CD4-positive, alpha-beta memory T cell (primary cell): ENCODE measurements at regions of chr6 and their contacts with region 1.

Region 1: DNA sequence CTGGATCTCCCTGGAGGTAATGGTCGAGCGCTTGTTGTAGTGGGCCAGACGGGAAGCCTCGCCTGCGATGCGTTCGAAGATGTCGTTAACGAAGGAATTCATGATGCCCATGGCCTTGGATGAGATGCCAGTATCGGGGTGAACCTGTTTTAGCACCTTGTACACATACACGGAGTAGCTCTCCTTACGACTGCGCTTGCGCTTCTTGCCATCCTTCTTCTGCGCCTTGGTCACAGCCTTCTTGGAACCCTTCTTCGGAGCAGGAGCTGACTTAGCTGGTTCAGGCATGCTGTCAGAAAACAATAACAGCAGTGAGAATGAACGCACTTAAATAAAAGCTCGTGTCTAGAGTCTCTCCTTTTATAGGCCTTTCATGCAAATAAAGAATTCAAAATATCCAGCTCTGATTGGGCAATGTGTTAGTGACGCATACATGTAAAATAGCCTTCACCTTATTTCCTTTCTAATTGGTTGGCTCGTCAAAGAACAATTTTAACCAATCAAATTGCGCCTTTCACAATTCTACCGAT is 129.2 kb downstream of the HFE start:
- DNase-seq: peak; percentile 88 to 96 (median 94)
- H3K4me3 ChIP-seq: peak overlapping the region; percentile 75 to 85
- H3K4me3 Mint-ChIP-seq: no peak overlapping the region
- H3K27ac ChIP-seq: peak overlapping the region; percentile 82
- H3K27ac Mint-ChIP-seq: no peak overlapping the region
- H3K4me1 ChIP-seq: peaks cover 26% of the 10 kb centered on the region
- H3K4me1 Mint-ChIP-seq: peaks cover 0 to 5% (median 2%) of the 10 kb centered on the region in 4 donors
- H3K27me3 ChIP-seq: no peaks in the 10 kb centered on the region
- H3K27me3 Mint-ChIP-seq: no peaks in the 10 kb centered on the region

Region 2: DNA sequence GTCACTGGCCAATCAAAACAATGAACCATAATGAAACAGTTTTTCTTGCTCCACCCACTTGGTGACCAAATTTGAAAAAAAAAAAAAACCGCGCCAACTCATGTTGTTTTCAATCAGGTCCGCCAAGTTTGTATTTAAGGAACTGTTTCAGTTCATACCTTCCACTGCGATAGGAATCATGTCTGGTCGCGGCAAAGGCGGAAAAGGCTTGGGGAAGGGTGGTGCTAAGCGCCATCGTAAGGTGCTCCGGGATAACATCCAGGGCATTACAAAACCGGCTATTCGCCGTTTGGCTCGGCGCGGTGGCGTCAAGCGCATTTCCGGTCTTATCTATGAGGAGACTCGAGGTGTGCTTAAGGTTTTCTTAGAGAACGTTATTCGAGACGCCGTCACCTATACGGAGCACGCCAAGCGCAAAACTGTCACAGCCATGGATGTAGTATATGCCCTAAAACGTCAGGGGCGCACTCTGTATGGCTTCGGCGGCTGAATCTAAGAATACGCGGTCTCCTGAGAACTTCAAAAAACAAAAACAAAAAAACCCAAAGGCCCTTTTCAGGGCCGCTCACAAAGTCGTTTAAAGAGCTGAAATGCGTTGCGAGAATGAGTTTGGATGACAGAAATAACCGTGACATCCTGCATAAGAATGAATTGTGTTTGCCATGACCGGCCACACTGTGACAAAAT is 112.5 kb before region 1 on chr6:
- CTCF ChIA-PET with region 1: interaction called, 3 read pairs
- POLR2A ChIA-PET with region 1: interaction called, 34 read pairs
- intact Hi-C with region 1: loop called (anchors 1 kb)
- DNase-seq: peak; percentile 93 to 96 (median 94)
- H3K4me3 ChIP-seq: peak overlapping the region; percentile 36 to 39
- H3K4me3 Mint-ChIP-seq: peak overlapping the region; percentile 84 to 96 (median 92)
- H3K27ac ChIP-seq: peak overlapping the region; percentile 66
- H3K27ac Mint-ChIP-seq: peak overlapping the region; percentile 96 to 100 (median 99)
- H3K4me1 ChIP-seq: peaks cover 17% of the 10 kb centered on the region
- H3K4me1 Mint-ChIP-seq: peaks cover 11 to 19% (median 15%) of the 10 kb centered on the region in 4 donors
- H3K27me3 ChIP-seq: no peaks in the 10 kb centered on the region
- H3K27me3 Mint-ChIP-seq: peaks cover 2 to 6% of the 10 kb centered on the region in 2 donors

Region 3: GRCh38 chr6:26204332-26205165 is 11.9 kb before region 1 on chr6:
- CTCF ChIA-PET with region 1: interaction called, 63 read pairs
- POLR2A ChIA-PET with region 1: interaction called, 1,953 read pairs
- intact Hi-C with region 1: loop called (anchors 1 kb)
- DNase-seq: peak; percentile 85 to 95 (median 89)
- H3K4me3 ChIP-seq: peak overlapping the region; percentile 48 to 87
- H3K4me3 Mint-ChIP-seq: no peak overlapping the region
- H3K27ac ChIP-seq: peak overlapping the region; percentile 82
- H3K27ac Mint-ChIP-seq: no peak overlapping the region
- H3K4me1 ChIP-seq: peaks cover 39% of the 10 kb centered on the region
- H3K4me1 Mint-ChIP-seq: peaks cover 8 to 26% (median 13%) of the 10 kb centered on the region in 4 donors
- H3K27me3 ChIP-seq: no peaks in the 10 kb centered on the region
- H3K27me3 Mint-ChIP-seq: peaks cover 0 to 3% of the 10 kb centered on the region in 2 donors

Region 4: DNA sequence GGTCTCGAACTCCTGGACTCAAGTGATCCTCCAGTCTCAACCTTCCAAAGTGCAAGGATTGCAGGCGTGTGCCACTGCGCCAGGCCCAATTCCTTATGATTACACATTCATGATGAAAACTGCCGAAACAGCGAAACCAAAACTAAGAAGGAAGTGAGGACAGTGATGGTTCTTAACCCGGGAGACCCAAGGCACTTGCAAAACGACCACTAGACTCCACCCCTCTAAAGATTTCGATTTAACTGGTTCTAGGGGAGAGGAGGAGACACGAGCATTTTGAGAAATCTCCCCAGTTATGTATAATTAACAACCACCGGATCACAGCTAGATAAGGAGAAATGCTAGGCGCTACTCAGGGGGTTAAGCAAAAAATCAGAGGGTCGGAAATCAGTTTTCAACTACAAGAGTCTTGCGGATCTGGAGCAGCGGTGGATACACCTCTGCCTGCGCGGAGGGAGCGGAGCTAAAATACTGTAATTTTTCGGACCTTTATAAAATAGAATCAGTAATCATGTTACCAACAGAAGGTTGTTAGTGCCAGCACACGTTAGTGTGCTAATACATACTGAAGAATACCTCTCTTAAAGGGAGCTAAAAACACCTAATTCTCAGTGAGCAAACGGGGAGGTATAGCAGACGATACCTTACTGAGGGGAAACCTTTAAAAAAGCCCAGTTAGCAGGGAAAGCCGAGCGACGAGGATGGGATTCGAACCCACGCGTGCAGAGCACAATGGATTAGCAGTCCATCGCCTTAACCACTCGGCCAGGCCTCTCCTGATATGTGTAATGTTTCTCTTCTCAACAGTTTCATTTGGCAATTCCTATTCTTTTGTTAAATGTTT is 88.6 kb after region 1 on chr6:
- CTCF ChIA-PET with region 1: no interaction called
- POLR2A ChIA-PET with region 1: interaction called, 10 read pairs
- intact Hi-C with region 1: no loop called
- DNase-seq: peak; percentile 48 to 80 (median 74)
- H3K4me3 ChIP-seq: peak overlapping the region; percentile 33 to 59
- H3K4me3 Mint-ChIP-seq: peak overlapping the region; percentile 86 to 97 (median 93)
- H3K27ac ChIP-seq: peak overlapping the region; percentile 51
- H3K27ac Mint-ChIP-seq: peak overlapping the region in 6 of 7 donors; percentile 92 to 96 (median 94)
- H3K4me1 ChIP-seq: peaks cover 19% of the 10 kb centered on the region
- H3K4me1 Mint-ChIP-seq: peaks cover 19 to 41% (median 31%) of the 10 kb centered on the region in 4 donors
- H3K27me3 ChIP-seq: no peaks in the 10 kb centered on the region
- H3K27me3 Mint-ChIP-seq: peaks cover 0 to 2% of the 10 kb centered on the region in 2 donors

Region 5: DNA sequence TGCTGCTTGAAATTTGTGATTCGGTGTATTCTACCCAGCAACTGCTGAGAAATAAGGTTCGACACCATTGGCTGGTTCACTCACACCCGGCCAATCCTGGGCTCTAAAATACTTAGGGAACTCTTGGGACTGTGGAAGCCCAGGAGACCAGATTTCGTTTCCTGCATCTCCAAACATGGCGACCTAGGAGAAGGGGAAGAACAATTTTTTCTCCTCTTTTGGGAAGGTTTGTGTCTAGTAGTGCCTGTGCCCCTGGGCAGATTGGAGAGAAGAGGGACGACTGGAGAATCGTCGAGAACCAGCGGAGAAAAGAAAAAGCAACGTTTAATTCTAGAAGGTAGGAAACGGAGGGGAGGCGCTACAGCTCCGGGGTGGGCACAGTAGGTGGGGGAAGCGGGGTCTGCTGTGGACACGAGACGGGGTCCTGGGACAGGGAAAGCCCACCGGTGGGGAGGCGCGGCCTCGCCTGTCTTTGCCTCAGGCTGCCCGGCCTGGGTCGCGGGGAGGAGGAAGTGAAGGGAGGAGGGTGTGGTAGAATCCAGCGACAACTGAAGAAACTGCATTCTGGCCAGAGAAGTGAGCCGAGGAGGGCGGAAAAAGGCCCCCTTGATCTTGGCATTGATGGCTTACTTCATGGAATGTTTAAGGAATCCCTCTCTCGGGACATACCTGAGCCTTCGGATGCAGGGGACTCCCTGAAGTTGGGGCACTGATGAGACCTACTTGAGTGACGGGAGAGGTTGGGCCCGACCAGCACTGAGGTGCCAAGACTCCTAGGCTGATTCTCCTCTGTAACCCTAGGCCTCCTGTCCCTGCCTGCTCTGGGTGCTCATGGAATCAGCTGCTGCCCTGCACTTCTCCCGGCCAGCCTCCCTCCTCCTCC is 241.6 kb after region 1 on chr6 and contains the start of gene BTN2A1:
- CTCF ChIA-PET with region 1: no interaction called
- POLR2A ChIA-PET with region 1: no interaction called
- intact Hi-C with region 1: no loop called
- DNase-seq: peak; percentile 76 to 86 (median 78)
- H3K4me3 ChIP-seq: peak within 1 kb of the TSS; percentile 90 to 95
- H3K4me3 Mint-ChIP-seq: peak within 1 kb of the TSS; percentile 96 to 100 (median 98)
- H3K27ac ChIP-seq: peak within 1 kb of the TSS; percentile 85
- H3K27ac Mint-ChIP-seq: peak within 1 kb of the TSS; percentile 91 to 99 (median 98)
- H3K4me1 ChIP-seq: peaks cover 47% of the 10 kb centered on the region
- H3K4me1 Mint-ChIP-seq: peaks cover 45 to 73% (median 57%) of the 10 kb centered on the region in 4 donors
- H3K27me3 ChIP-seq: no peaks in the 10 kb centered on the region
- H3K27me3 Mint-ChIP-seq: no peaks in the 10 kb centered on the region
- total RNA-seq, gene BTN2A1: 57.0 to 62.8 TPM

Region 6: DNA sequence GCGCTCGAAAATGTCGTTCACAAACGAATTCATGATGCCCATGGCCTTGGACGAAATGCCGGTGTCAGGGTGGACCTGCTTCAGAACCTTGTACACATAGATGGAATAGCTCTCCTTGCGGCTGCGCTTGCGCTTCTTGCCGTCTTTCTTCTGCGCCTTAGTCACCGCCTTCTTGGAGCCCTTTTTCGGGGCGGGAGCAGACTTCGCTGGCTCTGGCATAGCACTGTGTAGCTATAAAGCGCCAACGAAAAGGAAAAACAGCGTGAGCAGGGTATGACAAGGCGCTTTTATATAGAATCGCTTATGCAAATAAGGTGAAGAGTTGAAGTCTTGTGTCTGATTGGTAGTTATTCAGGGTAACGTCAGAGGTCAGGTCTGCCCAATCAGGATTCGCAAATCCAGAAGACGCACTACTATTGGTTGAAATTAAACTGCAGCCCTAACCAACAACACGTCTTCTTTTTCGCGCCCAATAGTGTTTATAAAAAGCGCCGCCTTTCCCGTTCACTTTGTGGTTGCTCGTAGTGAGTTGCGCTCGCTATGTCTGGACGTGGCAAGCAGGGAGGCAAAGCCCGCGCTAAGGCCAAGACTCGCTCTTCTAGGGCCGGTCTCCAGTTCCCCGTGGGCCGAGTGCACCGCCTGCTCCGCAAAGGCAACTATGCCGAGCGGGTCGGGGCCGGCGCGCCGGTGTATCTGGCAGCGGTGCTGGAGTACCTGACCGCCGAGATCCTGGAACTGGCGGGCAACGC is 916.3 kb after region 1 on chr6:
- CTCF ChIA-PET with region 1: no interaction called
- POLR2A ChIA-PET with region 1: interaction called, 40 read pairs
- intact Hi-C with region 1: no loop called
- DNase-seq: peak; percentile 96 to 99 (median 98)
- H3K4me3 ChIP-seq: peak overlapping the region; percentile 72 to 90
- H3K4me3 Mint-ChIP-seq: no peak overlapping the region
- H3K27ac ChIP-seq: peak overlapping the region; percentile 93
- H3K27ac Mint-ChIP-seq: no peak overlapping the region
- H3K4me1 ChIP-seq: peaks cover 27% of the 10 kb centered on the region
- H3K4me1 Mint-ChIP-seq: peaks cover 0 to 24% (median 10%) of the 10 kb centered on the region in 4 donors
- H3K27me3 ChIP-seq: no peaks in the 10 kb centered on the region
- H3K27me3 Mint-ChIP-seq: no peaks in the 10 kb centered on the region

Region 7: DNA sequence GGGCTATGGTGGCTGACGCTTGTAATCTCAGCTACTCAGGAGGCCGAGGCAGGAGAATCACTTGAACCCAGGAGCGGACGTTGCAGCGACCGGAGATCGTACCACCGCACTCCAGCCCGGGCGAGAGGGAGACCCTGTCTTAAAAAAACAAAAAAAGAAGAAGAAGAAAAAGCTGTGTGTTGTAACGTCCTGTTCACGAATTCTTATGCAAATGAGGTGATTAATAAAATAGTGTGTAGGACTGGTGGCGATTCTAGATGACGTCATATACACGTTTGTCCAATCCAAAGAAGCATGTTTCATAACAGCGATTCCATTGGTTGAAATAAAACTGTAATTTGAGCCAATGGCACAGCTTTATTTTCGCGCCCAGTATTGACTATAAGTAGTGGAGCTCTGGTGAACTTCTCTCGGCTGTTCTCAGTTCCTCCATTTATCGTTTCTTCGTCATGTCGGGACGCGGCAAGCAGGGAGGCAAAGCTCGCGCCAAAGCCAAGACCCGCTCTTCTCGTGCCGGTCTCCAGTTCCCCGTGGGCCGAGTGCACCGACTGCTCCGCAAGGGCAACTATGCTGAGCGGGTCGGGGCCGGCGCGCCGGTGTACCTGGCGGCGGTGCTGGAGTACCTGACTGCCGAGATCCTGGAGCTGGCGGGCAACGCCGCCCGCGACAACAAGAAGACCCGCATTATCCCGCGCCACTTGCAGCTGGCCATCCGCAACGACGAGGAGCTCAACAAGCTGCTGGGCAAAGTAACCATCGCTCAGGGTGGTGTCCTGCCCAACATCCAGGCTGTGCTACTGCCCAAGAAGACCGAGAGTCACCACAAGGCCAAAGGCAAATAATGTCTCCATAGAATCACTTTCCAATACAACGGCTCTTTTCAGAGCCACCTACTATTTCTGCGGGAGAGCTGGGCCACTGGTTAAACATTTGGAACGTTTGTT is 1648.8 kb after region 1 on chr6:
- CTCF ChIA-PET with region 1: no interaction called
- POLR2A ChIA-PET with region 1: interaction called, 14 read pairs
- intact Hi-C with region 1: no loop called
- DNase-seq: peak; percentile 86 to 93 (median 91)
- H3K4me3 ChIP-seq: peak overlapping the region; percentile 33 to 69
- H3K4me3 Mint-ChIP-seq: peak overlapping the region; percentile 96 to 99 (median 99)
- H3K27ac ChIP-seq: peak overlapping the region; percentile 62
- H3K27ac Mint-ChIP-seq: peak overlapping the region; percentile 94 to 99 (median 98)
- H3K4me1 ChIP-seq: peaks cover 31% of the 10 kb centered on the region
- H3K4me1 Mint-ChIP-seq: peaks cover 18 to 46% (median 34%) of the 10 kb centered on the region in 4 donors
- H3K27me3 ChIP-seq: no peaks in the 10 kb centered on the region
- H3K27me3 Mint-ChIP-seq: no peaks in the 10 kb centered on the region